Activated naive CD4-positive, alpha-beta T cell treated with anti-CD3 and anti-CD28 coated beads for 36 hours (primary cell): ENCODE measurements at regions of chr10 and their contacts with region 1.

Region 1: GRCh38 chr10:3740157-3740871 is 44.7 kb downstream of the KLF6 start:
- DNase-seq: no peak
- H3K4me3 Mint-ChIP-seq: no peak overlapping the region
- H3K27ac Mint-ChIP-seq: peak overlapping the region; percentile 59
- H3K4me1 Mint-ChIP-seq: peaks cover 31% of the 10 kb centered on the region
- H3K27me3 Mint-ChIP-seq: no peaks in the 10 kb centered on the region

Region 2: GRCh38 chr10:3107426-3107961 is 632.8 kb before region 1 on chr10:
- CTCF ChIA-PET with region 1: no interaction called
- intact Hi-C with region 1: no loop called
- DNase-seq: no peak
- H3K4me3 Mint-ChIP-seq: no peak overlapping the region
- H3K27ac Mint-ChIP-seq: no peak overlapping the region
- H3K4me1 Mint-ChIP-seq: no peaks in the 10 kb centered on the region
- H3K27me3 Mint-ChIP-seq: no peaks in the 10 kb centered on the region

Region 3: GRCh38 chr10:4246881-4247358 is 506.6 kb after region 1 on chr10:
- CTCF ChIA-PET with region 1: no interaction called
- intact Hi-C with region 1: loop called (anchors 5 kb)
- DNase-seq: no peak
- H3K4me3 Mint-ChIP-seq: no peak overlapping the region
- H3K27ac Mint-ChIP-seq: no peak overlapping the region
- H3K4me1 Mint-ChIP-seq: peaks cover 35% of the 10 kb centered on the region
- H3K27me3 Mint-ChIP-seq: no peaks in the 10 kb centered on the region